Colonic mucosa (tissue), 4 donors: ENCODE measurements at regions of chr2 and their contacts with region 1.

Region 1: DNA sequence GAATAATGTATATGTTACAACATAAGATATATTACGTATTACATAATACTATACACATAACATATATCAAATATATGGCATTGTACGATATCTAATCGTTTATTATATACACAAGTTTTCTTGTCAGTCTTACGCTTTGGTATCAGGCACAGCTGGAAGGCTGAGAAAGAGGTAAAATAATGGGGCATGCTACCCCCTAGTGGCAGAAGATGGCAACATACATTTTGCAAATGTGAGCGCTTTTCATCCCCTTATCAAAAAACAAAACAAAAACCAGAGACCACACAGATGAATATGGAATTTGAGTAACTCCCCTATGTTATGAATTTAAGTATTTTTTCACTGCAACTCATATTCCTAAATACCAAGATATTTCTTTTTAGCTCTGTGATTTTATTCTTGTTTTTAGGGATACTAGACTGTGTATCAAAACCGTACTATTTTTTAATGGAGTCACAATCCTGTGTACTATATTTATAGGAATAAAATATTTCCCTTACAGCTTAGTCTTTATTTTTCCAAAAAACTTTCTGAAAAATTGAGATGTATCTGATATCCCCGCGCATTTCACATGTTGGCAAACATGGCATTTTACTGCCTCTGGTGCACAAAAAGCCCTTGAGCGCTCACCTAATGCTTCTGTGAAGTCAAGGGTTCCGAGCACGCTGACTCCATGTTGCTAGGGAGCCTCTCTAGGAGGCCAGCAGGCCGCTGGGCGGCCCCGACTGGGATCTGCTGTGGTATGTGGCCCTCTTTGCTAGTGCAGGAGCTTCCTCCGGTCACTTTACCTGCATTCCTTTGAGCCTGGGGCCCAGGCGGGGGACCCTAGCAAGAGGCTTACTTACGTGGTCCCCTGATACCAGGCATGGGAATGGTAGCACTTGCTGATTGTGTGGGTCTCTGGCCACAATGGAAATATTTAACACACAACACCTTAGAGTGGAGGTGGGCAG is 62.5 kb downstream of the SLC4A3 start:
- DNase-seq: peak; percentile 51
- H3K4me3 ChIP-seq: no peak overlapping the region
- H3K27ac ChIP-seq: no peak overlapping the region
- H3K4me1 ChIP-seq: no peaks in the 10 kb centered on the region
- H3K27me3 ChIP-seq: peaks cover 8% of the 10 kb centered on the region
- CTCF ChIP-seq: peak; percentile 71

Region 2: GRCh38 chr2:219543601-219544358 is 146.2 kb before region 1 on chr2 and contains the starts of genes CHPF and TMEM198:
- intact Hi-C with region 1: loop called (anchors 5 kb)
- DNase-seq: peak; percentile 97
- H3K4me3 ChIP-seq: peak within 1 kb of the TSS; percentile 74
- H3K27ac ChIP-seq: peak within 1 kb of the TSS; percentile 92
- H3K4me1 ChIP-seq: peaks cover 4% of the 10 kb centered on the region
- H3K27me3 ChIP-seq: no peaks in the 10 kb centered on the region
- CTCF ChIP-seq: no peak
- total RNA-seq, gene CHPF: 43.1 to 43.5 TPM
- total RNA-seq, gene TMEM198: 1.7 to 2.9 TPM

Region 3: DNA sequence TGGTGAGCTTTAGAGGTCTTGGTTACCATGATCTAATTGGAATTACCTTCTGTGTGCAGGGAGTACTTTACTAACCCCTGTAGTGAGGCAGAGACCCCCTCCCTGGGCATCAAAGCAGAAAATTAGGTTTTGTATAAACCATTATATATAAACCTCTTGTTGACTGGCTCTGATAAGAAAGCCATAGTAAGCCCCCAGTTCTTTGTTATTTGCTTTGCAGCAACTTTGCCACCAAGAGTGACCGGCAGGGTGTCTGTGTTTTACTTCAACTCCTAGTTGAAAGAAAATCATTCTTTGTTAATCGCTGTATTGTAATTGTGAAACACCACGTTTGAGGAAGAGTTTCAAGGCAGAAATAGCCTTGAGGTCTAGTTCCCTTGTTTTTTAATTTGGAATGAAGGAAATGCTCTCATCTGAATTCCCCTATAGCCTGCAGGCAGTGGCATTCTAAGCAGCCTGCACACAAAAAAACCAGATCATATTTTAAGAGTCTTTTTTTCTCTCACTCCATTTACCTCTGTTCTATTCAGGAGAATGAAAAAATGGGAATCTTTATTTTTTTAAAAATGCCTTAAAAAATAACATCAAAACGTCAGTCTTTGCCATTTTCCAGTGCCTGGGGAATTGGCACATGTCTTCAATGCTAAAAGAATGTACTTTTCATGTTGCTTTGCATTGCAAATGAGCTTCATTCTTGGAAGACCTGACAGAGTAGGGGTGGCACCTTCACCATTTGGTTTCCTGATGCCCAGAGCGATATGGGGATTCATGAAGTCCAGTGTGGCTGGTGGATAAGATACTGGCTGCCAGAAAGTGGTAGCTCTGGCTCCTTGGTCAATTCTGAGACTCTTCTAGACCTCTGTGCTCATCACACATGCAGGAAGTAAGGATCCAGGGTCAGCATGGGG is 275.6 kb after region 1 on chr2:
- intact Hi-C with region 1: no loop called
- DNase-seq: no peak
- H3K4me3 ChIP-seq: no peak overlapping the region
- H3K27ac ChIP-seq: no peak overlapping the region
- H3K4me1 ChIP-seq: no peaks in the 10 kb centered on the region
- H3K27me3 ChIP-seq: no peaks in the 10 kb centered on the region
- CTCF ChIP-seq: no peak